Vagina (tissue), 2 donors: ENCODE measurements at regions of chr2 and their contacts with region 1.

Region 1: GRCh38 chr2:64653349-64654062 is at the start of gene SERTAD2:
- DNase-seq: no peak
- H3K4me3 ChIP-seq: peak within 1 kb of the TSS; percentile 74 to 92
- H3K27ac ChIP-seq: peak within 1 kb of the TSS; percentile 100
- H3K4me1 ChIP-seq: peaks cover 57% of the 10 kb centered on the region
- H3K27me3 ChIP-seq: no peaks in the 10 kb centered on the region
- CTCF ChIP-seq: no peak
- POLR2A ChIP-seq: peak in 1 of 2 donors; percentile 70
- total RNA-seq, gene SERTAD2: 19.2 TPM

Region 2: DNA sequence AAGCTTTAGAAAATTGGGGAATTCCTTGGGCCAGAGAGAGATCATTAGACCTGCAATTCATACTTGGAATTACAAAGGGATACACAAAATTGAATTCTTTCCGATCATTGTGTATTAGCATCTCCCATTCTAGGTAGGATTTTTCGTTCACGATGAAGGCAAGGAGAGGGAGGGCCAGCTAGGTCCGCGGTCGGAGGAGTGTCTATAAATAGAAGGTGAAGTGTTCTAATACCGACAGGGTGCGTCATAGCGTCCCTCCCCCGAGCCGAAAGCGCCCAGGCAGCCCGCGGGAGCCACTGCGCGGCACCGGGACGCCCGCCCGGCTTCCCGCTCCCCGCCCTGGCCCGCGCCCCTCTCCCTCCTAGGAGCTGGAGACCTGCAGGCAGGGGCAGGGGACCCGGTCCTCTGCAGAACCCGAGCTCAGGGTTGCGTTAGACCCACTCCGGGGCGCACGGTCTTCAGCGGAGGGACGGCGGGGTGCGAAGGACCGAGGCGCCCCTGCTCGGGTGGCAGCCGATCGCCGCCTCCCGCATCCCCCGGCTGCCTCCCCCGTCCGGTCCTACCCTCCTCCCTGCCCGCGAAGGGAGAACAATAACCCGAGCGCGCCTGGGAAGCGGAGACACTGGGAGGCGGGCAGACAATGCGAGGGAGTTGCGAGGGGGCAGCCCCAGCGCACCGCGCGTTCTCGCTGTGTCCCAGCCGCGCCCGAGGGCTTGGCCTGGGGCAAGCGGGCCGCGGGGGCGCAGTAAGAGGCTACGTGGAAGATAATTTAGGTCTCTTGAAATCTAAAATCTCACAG is 114.4 kb after region 1 on chr2:
- intact Hi-C with region 1: loop called (anchors 5 kb)
- DNase-seq: no peak
- H3K4me3 ChIP-seq: peak overlapping the region; percentile 70 to 83
- H3K27ac ChIP-seq: peak overlapping the region; percentile 97
- H3K4me1 ChIP-seq: peaks cover 30% of the 10 kb centered on the region
- H3K27me3 ChIP-seq: no peaks in the 10 kb centered on the region
- CTCF ChIP-seq: no peak
- POLR2A ChIP-seq: peak in 1 of 2 donors; percentile 90

Region 3: GRCh38 chr2:66536997-66537396 is 1883.5 kb after region 1 on chr2:
- intact Hi-C with region 1: no loop called
- DNase-seq: no peak
- H3K4me3 ChIP-seq: no peak overlapping the region
- H3K27ac ChIP-seq: no peak overlapping the region
- H3K4me1 ChIP-seq: peaks cover 77% of the 10 kb centered on the region
- H3K27me3 ChIP-seq: no peaks in the 10 kb centered on the region
- CTCF ChIP-seq: no peak
- POLR2A ChIP-seq: no peak